Calu3 (cell line): ENCODE measurements at regions of chr18 and their contacts with region 1.

Region 1: DNA sequence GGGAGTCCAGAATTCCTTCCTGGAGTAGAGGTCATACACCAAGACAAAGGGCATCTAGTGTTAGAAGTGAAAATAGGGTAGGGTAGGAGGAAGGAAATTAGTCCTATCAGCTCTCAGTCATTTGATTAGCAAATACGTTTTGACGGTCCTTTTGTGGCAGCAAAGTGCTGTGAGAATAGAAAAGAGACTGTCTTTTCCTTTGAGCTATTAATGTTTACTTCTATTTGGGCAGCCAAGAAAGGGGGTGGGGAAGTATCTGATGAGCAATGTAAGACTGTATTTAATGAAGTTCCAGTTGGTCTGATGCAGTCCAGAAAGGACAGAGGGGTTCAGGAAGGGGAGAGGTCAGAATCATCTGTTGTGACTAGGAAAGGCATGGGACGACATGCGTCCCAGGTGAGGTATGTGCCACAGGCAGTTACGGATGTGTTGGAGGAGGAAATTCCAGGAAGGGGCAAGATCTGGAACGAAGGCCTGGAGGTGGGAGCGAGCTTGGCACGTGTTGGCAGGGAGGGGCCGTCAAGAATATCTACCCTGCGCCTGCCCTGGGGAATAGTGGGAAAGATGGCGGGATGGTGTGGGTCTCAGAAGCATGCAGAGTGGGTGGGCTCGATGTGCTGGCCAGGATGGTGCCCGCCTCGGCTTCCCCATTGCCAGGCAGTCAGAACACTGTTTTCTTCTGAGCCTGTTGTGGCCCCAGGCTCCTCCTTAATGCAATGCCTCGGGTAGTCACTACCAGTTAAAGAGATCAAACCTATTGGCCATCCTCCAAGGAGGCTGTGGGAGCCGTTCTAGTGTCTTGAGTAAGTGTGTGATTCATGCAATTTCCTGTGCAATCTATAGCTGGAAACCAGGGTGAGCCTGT is 57.9 kb upstream of the TXNDC2 start:
- DNase-seq: peak; percentile 70
- H3K4me3 Mint-ChIP-seq: peak overlapping the region; percentile 39
- H3K27ac Mint-ChIP-seq: peak overlapping the region; percentile 83
- H3K4me1 Mint-ChIP-seq: peaks cover 18% of the 10 kb centered on the region
- H3K27me3 Mint-ChIP-seq: no peaks in the 10 kb centered on the region
- CTCF ChIP-seq: no peak

Region 2: DNA sequence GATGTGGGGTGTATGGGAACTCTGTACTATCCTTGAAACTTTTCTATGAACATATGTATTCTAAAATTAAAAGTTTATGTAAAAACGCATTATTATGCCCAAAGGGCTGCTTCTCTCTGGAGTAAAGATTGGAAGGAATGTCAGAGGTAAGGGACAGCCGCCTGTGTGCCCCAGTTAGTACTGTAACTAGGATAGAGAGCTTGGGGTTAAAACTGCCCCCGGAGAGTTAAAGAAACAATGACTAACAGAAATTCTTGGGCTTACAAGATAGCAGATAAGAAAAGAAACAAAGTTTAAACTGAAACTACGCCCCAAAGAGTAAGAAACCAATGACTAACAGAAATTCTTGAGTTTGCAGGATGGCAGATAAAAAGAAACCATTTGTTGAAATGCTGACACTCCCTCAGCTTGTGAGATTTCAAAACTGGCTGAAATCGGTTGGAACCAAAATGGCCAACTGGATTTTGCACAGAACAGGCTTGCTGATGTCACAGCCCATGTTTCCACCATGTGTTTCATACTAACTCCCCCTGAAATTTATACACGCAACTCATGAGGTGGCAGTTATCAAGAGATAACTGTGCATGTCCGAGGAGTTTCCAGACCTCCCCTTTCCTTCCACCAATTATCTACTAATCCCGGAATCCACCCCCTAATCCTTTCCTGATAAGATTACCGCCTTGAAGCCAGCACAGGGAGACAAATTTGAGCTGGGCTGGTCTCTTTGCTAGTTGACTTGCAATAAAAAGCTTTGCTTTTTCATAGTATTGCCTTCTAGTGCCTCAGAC is 49.2 kb after region 1 on chr18:
- CTCF ChIA-PET with region 1: no interaction called
- intact Hi-C with region 1: loop called (anchors 5 kb)
- DNase-seq: peak; percentile 54
- H3K4me3 Mint-ChIP-seq: peak overlapping the region; percentile 67
- H3K27ac Mint-ChIP-seq: peak overlapping the region; percentile 97
- H3K4me1 Mint-ChIP-seq: peaks cover 25% of the 10 kb centered on the region
- H3K27me3 Mint-ChIP-seq: no peaks in the 10 kb centered on the region
- CTCF ChIP-seq: no peak

Region 3: DNA sequence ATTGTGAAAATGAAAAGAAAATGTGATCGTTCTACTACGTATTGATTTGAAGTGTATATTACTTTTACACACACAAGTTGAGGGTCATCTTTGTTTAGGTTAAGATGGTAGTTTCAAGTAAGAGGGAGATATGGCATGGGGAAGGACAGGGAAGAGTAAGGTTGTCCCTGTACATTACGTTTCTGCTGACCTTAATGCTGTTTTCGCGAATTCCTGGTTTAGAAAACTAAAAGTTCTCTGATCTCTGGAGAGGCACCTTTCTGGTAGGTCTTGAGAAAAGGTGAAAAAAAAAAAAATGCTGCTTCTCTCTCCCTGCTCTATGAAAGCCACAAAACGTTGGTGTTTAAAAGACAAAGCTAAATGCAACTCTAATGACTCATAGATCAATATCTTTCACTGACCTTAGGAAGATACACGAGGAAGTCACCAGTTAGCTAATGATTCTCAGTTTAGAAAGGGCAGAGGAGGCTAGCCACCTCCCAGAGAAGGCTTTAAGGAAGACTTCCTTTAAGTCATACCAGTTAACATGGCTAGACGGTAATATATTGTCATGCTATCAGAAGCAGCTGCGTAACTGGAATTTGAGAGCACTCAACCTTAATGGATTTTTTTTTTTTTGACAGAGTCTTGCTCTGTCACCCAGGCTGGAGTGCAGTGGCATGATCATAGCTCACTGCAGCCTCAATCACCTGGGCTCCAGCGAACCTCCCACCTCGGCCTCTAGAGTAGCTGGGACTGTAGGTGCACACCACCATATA is 71.1 kb after region 1 on chr18:
- CTCF ChIA-PET with region 1: no interaction called
- intact Hi-C with region 1: loop called (anchors 5 kb)
- DNase-seq: peak; percentile 45
- H3K4me3 Mint-ChIP-seq: peak overlapping the region; percentile 18
- H3K27ac Mint-ChIP-seq: peak overlapping the region; percentile 64
- H3K4me1 Mint-ChIP-seq: peaks cover 34% of the 10 kb centered on the region
- H3K27me3 Mint-ChIP-seq: no peaks in the 10 kb centered on the region
- CTCF ChIP-seq: no peak

Region 4: DNA sequence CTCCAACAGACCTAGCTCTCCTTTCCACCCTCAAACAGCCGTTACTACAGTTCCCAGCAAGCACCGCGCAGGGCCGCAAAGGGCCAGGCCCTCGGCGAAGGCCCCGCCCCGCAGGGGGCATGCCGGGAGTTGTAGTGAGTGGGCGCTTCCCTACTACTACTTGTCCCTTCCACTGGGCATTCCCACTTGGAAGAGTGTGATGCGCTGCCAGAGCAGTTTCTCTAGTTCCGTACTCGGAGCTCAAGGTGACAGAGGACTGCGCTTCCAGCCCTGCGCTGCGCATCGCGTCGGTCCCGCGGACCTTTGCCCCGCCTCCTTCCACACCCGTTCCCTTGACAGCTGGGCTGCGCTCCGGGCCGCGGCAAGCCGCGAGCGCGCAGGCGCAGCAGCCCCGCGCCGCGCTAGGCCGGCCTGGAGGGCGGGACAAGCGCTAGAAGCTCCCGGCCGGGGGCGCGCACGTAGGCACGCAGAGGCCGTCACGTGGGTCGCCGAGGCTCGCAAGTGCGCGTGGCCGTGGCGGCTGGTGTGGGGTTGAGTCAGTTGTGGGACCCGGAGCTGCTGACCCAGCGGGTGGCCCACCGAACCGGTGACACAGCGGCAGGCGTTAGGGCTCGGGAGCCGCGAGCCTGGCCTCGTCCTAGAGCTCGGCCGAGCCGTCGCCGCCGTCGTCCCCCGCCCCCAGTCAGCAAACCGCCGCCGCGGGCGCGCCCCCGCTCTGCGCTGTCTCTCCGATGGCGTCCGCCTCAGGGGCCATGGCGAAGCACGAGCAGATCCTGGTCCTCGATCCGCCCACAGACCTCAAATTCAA is 85.9 kb after region 1 on chr18 and contains the start of gene VAPA:
- CTCF ChIA-PET with region 1: no interaction called
- intact Hi-C with region 1: loop called (anchors 5 kb)
- DNase-seq: peak; percentile 96
- H3K4me3 Mint-ChIP-seq: peak within 1 kb of the TSS; percentile 86
- H3K27ac Mint-ChIP-seq: peak within 1 kb of the TSS; percentile 93
- H3K4me1 Mint-ChIP-seq: peaks cover 15% of the 10 kb centered on the region
- H3K27me3 Mint-ChIP-seq: peaks cover 13% of the 10 kb centered on the region
- CTCF ChIP-seq: no peak
- total RNA-seq, gene VAPA: 196 and 227 TPM in 2 replicates

Region 5: GRCh38 chr18:9951022-9951859 is 123.4 kb after region 1 on chr18:
- CTCF ChIA-PET with region 1: no interaction called
- intact Hi-C with region 1: loop called (anchors 5 kb)
- DNase-seq: peak; percentile 41
- H3K4me3 Mint-ChIP-seq: no peak overlapping the region
- H3K27ac Mint-ChIP-seq: peak overlapping the region; percentile 70
- H3K4me1 Mint-ChIP-seq: peaks cover 16% of the 10 kb centered on the region
- H3K27me3 Mint-ChIP-seq: no peaks in the 10 kb centered on the region
- CTCF ChIP-seq: peak; percentile 65